SK-N-SH (cell line): ENCODE measurements at regions of chr1 and their contacts with region 1.

Region 1: GRCh38 chr1:39653546-39654031 is 14.1 kb upstream of the HEYL start:
- DNase-seq: peak; percentile 64
- H3K4me3 ChIP-seq: no peak overlapping the region
- H3K27ac ChIP-seq: peak overlapping the region in 1 of 2 experiments; percentile 100; a peak in 2 of 4 replicates
- H3K4me1 ChIP-seq: peaks cover 0 to 62% of the 10 kb centered on the region in 2 experiments; a peak in 2 of 4 replicates
- H3K27me3 ChIP-seq: no peaks in the 10 kb centered on the region
- CTCF ChIP-seq: peak; percentile 87
- EP300 ChIP-seq: no peak
- RAD21 ChIP-seq: peak; percentile 92

Region 2: DNA sequence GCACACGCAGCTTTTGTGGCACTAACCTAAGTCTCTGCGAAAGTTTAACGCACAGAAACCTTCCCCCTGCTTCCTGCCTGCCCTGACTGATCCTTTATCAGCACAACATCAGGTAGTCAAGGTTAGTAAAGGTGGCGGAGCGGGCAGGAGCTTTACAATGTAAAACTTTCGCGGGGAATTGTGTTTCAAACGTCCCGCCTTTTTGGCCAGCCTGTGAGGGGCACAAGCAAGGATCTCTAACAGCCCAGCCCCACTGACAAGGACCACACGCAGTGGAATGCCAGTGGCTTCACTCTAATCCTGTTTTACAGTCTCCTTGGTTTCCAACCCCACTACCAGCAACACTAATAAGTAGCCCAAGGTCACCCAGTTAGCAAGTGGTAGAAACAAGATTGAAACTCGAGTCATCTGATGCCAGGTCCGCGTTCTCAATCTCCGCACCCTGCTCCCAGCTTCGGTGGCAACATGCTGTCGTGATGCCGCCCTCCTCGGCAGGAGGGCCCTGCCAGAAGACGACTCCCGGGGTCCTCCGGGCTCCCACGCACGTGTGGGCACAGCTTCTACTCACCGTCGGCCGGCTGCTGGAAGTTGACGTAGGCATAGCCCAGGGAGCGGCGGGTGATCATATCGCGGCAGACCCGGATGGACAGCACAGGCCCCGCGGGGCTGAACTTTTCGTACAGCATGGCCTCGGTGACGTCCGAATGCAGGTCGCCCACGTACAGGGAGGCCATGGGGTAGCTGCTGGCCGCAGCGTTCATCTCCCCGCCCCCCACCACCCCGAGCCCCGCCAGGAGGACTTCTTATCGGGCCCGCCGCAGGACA is 78.2 kb before region 1 on chr1:
- CTCF ChIA-PET with region 1: interaction called, 13 read pairs
- POLR2A ChIA-PET with region 1: interaction called, 8 read pairs
- DNase-seq: peak; percentile 76
- H3K4me3 ChIP-seq: peak overlapping the region; percentile 75 to 89
- H3K27ac ChIP-seq: peak overlapping the region; percentile 65 to 74; a peak in 3 of 4 replicates
- H3K4me1 ChIP-seq: peaks cover 14 to 22% of the 10 kb centered on the region in 2 experiments
- H3K27me3 ChIP-seq: no peaks in the 10 kb centered on the region
- CTCF ChIP-seq: no peak
- EP300 ChIP-seq: no peak
- RAD21 ChIP-seq: no peak

Region 3: DNA sequence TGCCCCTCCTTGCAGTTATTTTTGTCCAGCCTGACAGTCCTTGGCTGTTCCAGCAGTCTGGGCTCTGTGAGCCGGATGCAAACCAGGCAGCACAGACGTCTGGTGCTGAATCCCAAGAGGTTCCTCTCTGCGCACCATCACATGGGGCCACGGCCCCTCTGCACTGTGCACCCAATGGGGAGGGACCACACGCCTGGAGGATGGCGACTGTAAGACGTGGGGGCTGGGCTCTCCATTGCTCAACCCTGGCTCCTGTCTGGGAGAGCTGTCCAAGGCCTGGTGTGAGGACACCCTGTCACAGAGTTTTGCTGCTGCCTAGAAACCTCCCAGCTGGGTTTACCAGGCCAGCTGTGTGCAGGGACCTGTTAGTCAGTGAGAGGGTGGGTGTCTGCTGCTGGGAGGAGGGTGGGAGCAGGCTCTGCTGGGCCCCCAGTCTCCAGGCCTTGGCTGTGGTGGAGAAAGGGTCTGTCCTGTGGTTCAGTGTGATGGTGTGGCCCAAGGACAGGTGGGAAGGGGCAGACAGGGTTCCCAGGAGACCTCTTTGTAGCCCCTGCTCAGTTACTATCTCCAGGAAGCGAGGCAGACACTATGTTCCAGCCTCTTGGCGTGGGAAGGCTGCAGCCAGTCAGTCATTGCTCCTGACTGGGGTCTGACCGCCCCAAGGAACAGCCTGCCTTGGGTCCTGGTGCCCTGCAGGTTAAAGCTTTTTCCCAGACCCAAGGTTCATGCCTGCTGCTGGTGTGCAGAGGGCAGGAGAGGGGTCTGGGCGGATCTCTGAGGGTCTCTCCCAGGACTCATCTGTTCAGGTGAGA is 27.9 kb before region 1 on chr1:
- CTCF ChIA-PET with region 1: interaction called, 17 read pairs
- POLR2A ChIA-PET with region 1: interaction called, 5 read pairs
- DNase-seq: peak; percentile 60
- H3K4me3 ChIP-seq: no peak overlapping the region
- H3K27ac ChIP-seq: peak overlapping the region in 1 of 2 experiments; percentile 70; a peak in 2 of 4 replicates
- H3K4me1 ChIP-seq: peaks cover 0 to 29% of the 10 kb centered on the region in 2 experiments; a peak in 1 of 4 replicates
- H3K27me3 ChIP-seq: peaks cover 4% of the 10 kb centered on the region
- CTCF ChIP-seq: no peak
- EP300 ChIP-seq: no peak
- RAD21 ChIP-seq: no peak

Region 4: GRCh38 chr1:39639305-39640130 is 14.1 kb before region 1 on chr1 and contains the start of gene HEYL:
- CTCF ChIA-PET with region 1: interaction called, 18 read pairs
- POLR2A ChIA-PET with region 1: interaction called, 4 read pairs
- DNase-seq: no peak
- H3K4me3 ChIP-seq: no peak within 1 kb of the TSS
- H3K27ac ChIP-seq: no peak within 1 kb of the TSS; a peak in 1 of 4 replicates
- H3K4me1 ChIP-seq: peaks cover 4 to 21% of the 10 kb centered on the region in 2 experiments; a peak in 3 of 4 replicates
- H3K27me3 ChIP-seq: no peaks in the 10 kb centered on the region
- CTCF ChIP-seq: no peak
- EP300 ChIP-seq: no peak
- RAD21 ChIP-seq: no peak
- polyA plus RNA-seq, gene HEYL: not detected in 2 replicates

Region 5: GRCh38 chr1:39691262-39692151 is 37.9 kb after region 1 on chr1 and contains the start of gene HPCAL4:
- CTCF ChIA-PET with region 1: interaction called, 35 read pairs
- POLR2A ChIA-PET with region 1: interaction called, 10 read pairs
- DNase-seq: peak; percentile 96
- H3K4me3 ChIP-seq: peak within 1 kb of the TSS; percentile 49 to 73
- H3K27ac ChIP-seq: peak within 1 kb of the TSS in 1 of 2 experiments; percentile 67; a peak in 1 of 4 replicates
- H3K4me1 ChIP-seq: peaks cover 0 to 32% of the 10 kb centered on the region in 2 experiments; a peak in 2 of 4 replicates
- H3K27me3 ChIP-seq: peaks cover 45% of the 10 kb centered on the region
- CTCF ChIP-seq: no peak
- EP300 ChIP-seq: no peak
- RAD21 ChIP-seq: no peak
- polyA plus RNA-seq, gene HPCAL4: 0.15 and 0.55 TPM in 2 replicates

Region 6: DNA sequence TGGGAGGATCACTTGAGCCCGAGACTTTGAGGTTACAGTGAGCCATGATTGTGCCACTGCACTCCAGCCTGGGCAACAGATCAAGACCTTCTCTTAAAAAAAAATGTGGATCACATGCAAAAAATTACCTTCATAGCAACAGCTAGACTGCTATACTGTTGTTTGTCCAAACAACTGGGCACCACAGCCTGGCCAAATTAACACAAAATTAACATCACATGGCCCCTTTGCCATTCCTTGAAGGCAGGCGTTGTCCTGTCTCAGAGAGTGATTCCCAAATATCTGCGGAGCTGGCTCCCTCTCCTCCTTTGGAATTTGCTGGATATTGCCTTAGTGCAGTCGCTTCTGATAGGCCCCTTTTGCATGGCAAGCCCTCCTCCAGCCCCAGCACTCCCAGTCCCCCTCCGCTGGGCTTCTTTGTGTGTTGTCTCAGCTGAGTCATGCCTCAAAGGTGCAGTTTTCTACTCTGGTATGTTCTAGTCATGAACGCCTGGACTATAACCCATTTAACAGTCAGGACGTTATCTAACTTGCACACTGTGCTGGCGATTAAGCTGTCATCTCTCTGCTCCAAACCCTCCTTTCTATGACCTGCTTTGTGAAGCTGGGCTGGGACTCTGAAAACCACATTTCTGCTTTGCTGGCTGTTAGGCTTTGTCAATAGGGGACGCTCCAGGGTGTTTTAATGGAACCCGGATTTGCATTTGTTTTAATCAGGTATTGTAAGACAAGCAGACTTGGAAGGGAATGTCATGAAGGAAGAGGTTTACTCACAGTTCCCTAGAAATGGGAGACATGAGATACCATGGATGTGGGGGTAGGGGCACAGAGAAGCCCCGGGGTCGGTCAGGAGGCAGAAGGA is 57.7 kb after region 1 on chr1:
- CTCF ChIA-PET with region 1: interaction called, 13 read pairs
- POLR2A ChIA-PET with region 1: no interaction called
- DNase-seq: no peak
- H3K4me3 ChIP-seq: no peak overlapping the region
- H3K27ac ChIP-seq: no peak overlapping the region
- H3K4me1 ChIP-seq: peaks cover 0 to 6% of the 10 kb centered on the region in 2 experiments; a peak in 1 of 4 replicates
- H3K27me3 ChIP-seq: peaks cover 15% of the 10 kb centered on the region
- CTCF ChIP-seq: no peak
- EP300 ChIP-seq: no peak
- RAD21 ChIP-seq: no peak

Region 7: DNA sequence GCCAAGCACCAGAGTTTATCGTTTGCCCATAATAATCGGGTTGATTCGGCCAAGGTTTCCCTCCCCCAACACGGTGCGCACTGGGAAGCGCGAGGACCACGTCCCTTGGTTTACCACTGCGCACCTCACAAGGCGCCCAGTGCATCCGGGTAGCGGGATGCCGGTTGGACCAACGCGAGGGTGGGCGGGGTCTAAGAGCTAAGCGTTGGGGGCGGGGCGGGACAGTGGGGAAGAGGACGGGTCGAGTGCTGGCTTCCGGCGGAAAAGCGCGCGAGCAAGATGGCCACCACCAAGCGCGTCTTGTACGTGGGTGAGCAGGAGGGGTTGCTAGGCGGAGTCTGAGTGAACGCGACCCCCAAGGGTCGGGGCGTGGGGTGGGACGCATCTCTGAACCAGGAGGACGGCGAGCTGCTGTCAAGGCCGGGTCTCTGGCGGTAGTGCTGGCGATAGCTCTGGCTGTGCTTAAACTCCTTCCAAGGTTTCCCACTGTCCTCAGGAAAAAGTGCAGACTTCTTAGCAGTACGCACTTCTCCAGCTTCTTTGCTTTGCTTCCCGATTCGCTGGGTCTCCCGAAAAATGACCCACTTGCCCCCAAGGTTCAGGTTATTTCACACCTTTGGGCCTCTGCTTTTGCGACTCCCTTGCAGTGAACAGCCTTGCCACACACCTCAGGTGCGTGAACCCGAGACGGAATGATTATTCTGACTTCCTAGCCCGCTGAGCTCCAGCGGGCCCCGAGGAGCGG is 85.2 kb after region 1 on chr1 and contains the start of gene PPIE:
- CTCF ChIA-PET with region 1: interaction called, 11 read pairs
- POLR2A ChIA-PET with region 1: interaction called, 4 read pairs
- DNase-seq: peak; percentile 94
- H3K4me3 ChIP-seq: peak within 1 kb of the TSS; percentile 71 to 90
- H3K27ac ChIP-seq: peak within 1 kb of the TSS; percentile 55 to 80; a peak in 3 of 4 replicates
- H3K4me1 ChIP-seq: peaks cover 0 to 14% of the 10 kb centered on the region in 2 experiments; a peak in 2 of 4 replicates
- H3K27me3 ChIP-seq: no peaks in the 10 kb centered on the region
- CTCF ChIP-seq: no peak
- EP300 ChIP-seq: no peak
- RAD21 ChIP-seq: no peak
- polyA plus RNA-seq, gene PPIE: 78.4 and 105 TPM in 2 replicates